CD4-positive, alpha-beta T cell (primary cell): ENCODE measurements at regions of chr18 and their contacts with region 1.

Region 1: DNA sequence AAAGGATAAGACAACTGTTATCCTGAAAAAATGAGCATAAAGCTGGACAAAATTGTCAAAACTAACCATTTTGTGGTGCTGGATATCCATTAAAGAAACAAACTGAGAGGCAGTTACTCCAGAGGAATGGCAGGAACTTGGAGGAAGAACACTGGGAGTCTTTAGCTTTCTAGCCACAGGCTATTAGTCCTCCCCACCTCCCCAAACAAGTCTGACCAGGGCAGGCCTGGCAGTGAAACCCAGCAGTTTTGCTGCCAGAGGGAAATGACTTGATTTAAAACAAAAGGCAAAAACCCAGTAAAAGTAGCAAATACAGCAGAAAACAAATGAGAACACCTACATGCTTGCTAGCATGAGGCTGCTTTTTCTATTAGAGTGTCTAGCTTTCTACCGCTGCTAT is 34.9 kb downstream of the OSBPL1A start:
- DNase-seq: no peak
- ATAC-seq: no peak
- H3K4me3 ChIP-seq: no peak overlapping the region
- H3K4me3 Mint-ChIP-seq: no peak overlapping the region
- H3K27ac ChIP-seq: no peak overlapping the region
- H3K27ac Mint-ChIP-seq: no peak overlapping the region
- H3K4me1 ChIP-seq: no peaks in the 10 kb centered on the region
- H3K4me1 Mint-ChIP-seq: no peaks in the 10 kb centered on the region
- H3K27me3 ChIP-seq: no peaks in the 10 kb centered on the region
- H3K27me3 Mint-ChIP-seq: no peaks in the 10 kb centered on the region
- CTCF ChIP-seq: no peak

Region 2: GRCh38 chr18:24173997-24174396 is 188.8 kb before region 1 on chr18:
- CTCF ChIA-PET with region 1: no interaction called
- POLR2A ChIA-PET with region 1: no interaction called
- intact Hi-C with region 1: no loop called
- DNase-seq: no peak
- ATAC-seq: no peak
- H3K4me3 ChIP-seq: no peak overlapping the region
- H3K4me3 Mint-ChIP-seq: no peak overlapping the region
- H3K27ac ChIP-seq: no peak overlapping the region
- H3K27ac Mint-ChIP-seq: no peak overlapping the region
- H3K4me1 ChIP-seq: no peaks in the 10 kb centered on the region
- H3K4me1 Mint-ChIP-seq: no peaks in the 10 kb centered on the region
- H3K27me3 ChIP-seq: no peaks in the 10 kb centered on the region
- H3K27me3 Mint-ChIP-seq: no peaks in the 10 kb centered on the region
- CTCF ChIP-seq: no peak

Region 3: DNA sequence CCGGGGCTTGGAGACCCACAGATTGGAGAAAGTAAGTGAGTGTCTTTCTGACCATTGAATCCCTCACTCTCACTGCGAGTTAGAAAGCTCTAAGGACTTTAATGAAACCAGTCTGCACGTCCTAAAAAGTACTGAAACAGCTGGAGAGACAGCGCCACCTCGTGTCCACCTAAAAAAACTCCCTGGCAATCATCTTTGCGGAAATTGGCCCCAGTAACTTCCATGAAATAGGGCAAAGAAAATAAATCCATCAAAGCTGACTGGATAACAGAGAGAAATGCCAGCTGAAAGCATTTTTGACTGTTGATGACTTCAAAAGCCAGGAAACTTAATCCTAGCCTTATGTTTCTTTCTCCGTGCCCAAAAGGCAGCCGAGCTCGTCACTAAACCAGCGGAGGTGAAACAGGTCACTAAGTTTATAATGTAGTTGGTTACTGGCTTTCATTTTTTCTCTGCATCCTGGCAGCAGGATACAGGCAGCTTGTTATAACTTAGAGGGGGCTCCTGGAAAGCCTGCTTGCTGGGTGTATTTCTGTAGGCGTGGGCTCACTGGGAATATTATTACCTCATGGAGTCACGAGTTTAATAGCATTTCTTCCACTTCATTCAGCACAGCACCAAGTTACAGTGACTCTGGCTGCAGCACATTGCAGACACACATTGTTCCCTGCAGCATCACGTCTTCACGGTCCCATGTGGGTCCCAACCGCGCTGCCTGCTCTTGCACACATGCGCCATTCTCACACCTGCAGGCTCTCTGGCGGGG is 364.2 kb after region 1 on chr18:
- CTCF ChIA-PET with region 1: interaction called, 4 read pairs
- POLR2A ChIA-PET with region 1: no interaction called
- intact Hi-C with region 1: loop called (anchors 2 kb)
- DNase-seq: peak; percentile 17 to 74 (median 36)
- ATAC-seq: no peak
- H3K4me3 ChIP-seq: no peak overlapping the region
- H3K4me3 Mint-ChIP-seq: no peak overlapping the region
- H3K27ac ChIP-seq: no peak overlapping the region
- H3K27ac Mint-ChIP-seq: no peak overlapping the region
- H3K4me1 ChIP-seq: no peaks in the 10 kb centered on the region
- H3K4me1 Mint-ChIP-seq: no peaks in the 10 kb centered on the region
- H3K27me3 ChIP-seq: peaks cover 4 to 5% of the 10 kb centered on the region in 2 experiments
- H3K27me3 Mint-ChIP-seq: peaks cover 3% of the 10 kb centered on the region
- CTCF ChIP-seq: peak; percentile 71